WTC11 (cell line): ENCODE measurements at regions of chr9 and their contacts with region 1.

Region 1: DNA sequence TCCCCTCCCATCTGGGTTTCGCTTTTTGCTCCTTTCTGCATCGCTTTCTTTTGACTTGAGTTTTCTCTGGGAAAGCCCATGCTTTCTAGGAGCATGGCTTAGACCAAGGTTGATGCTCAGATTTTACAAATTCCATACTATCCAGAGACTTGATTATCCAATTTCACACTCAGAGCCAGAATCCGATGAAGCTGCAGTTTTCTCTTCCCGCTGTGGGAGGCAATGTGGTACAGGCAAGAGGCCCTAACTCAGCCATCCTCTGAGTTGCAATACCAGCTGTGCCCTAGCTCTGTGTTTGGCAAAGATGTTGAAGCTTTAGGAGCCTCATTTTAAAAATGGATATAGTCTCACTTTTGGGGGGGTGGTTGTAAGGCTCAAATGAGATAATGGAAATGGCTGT is 85.1 kb downstream of the BRINP1 start:
- DNase-seq: peak; percentile 38
- ATAC-seq: peak; percentile 62
- H3K4me3 Mint-ChIP-seq: peak overlapping the region; percentile 60
- H3K27ac Mint-ChIP-seq: peak overlapping the region; percentile 98
- H3K4me1 Mint-ChIP-seq: peaks cover 85% of the 10 kb centered on the region
- H3K27me3 Mint-ChIP-seq: no peaks in the 10 kb centered on the region
- CTCF ChIP-seq: no peak

Region 2: DNA sequence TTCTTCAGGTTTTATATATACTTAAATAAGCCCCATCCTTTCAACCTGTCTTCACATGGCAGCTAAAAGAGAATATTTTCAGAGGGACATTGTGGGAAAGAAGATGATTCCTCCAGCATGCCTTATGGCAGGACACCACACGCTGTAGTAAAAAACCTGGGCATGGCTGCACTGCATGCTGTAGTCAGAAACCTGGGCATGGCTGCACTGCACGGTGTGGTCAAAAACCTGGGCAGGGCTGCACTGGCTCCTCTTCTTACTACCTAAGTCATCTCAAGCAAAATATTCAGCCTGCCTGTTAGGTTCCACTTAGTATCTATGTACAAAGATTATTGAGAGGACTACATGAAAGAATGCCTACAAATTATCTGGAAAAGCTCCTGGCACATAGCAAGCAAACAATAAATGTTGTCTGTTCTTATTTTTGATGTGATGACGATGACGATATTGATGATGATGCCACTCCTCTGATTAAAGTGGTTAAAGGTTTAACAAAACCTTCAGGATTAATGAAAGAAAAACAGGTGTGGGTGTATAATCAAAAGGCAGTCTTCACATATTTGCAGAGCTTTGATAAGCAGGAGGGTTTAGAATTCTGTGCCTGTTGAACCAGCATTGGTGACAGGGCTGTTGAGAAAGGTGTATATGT is 68.3 kb before region 1 on chr9:
- CTCF ChIA-PET with region 1: no interaction called
- POLR2A ChIA-PET with region 1: no interaction called
- DNase-seq: no peak
- ATAC-seq: no peak
- H3K4me3 Mint-ChIP-seq: no peak overlapping the region
- H3K27ac Mint-ChIP-seq: no peak overlapping the region
- H3K4me1 Mint-ChIP-seq: peaks cover 11% of the 10 kb centered on the region
- H3K27me3 Mint-ChIP-seq: no peaks in the 10 kb centered on the region
- CTCF ChIP-seq: no peak

Region 3: DNA sequence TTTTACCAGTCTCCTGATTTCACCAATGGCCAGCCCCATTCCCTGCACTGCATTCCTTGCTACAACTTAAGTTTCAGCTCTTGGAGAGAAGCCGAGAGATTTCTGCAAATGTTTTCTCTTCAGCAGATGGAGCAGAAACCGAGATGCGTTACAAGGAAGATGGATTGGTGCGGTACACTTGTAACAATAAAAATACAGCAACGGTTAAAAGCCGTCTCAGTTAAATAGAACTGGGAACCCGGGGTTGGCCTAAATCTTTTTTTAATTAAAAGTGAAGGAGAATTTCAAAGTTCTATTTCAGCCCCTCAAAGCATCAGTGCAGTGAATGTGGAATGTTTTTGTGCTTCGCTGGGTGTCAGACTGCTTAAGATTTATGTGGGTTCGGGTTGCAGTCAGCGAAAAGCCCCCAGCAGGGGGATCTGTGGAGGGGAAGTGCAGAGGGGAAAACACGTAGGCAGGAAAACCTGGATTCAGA is 65.3 kb after region 1 on chr9:
- CTCF ChIA-PET with region 1: interaction called, 11 read pairs
- POLR2A ChIA-PET with region 1: no interaction called
- DNase-seq: peak; percentile 61
- ATAC-seq: peak; percentile 88
- H3K4me3 Mint-ChIP-seq: peak overlapping the region; percentile 35; the same call in 1 of the 2 replicates
- H3K27ac Mint-ChIP-seq: 0 out of 2 replicates have a peak overlapping the region, but pooled peaks have one; percentile 6
- H3K4me1 Mint-ChIP-seq: peaks cover 67% of the 10 kb centered on the region
- H3K27me3 Mint-ChIP-seq: no peaks in the 10 kb centered on the region; the same call in 1 of the 2 replicates
- CTCF ChIP-seq: no peak

Region 4: DNA sequence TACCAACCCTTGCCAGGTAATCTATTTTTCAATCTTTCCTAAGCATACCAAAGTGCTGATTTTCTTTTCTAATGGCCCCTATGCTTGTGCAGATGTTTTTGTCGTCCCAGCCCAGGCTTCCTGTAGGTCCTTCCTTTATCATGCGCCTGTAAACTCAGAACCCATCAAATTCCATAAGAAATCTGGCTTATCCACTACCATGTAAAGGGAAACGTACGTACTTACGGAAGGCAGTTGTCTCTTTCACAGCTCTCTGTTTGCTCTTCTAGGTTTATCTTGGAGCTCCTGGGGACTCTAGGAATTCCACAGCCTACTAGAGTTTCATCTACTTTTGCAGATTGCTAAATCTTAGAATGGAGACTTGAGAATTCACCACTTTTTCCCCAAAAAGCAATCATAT is 76.1 kb after region 1 on chr9:
- CTCF ChIA-PET with region 1: interaction called, 64 read pairs
- POLR2A ChIA-PET with region 1: no interaction called
- DNase-seq: no peak
- ATAC-seq: peak; percentile 71
- H3K4me3 Mint-ChIP-seq: no peak overlapping the region; the same call in 1 of the 2 replicates
- H3K27ac Mint-ChIP-seq: peak overlapping the region; percentile 73
- H3K4me1 Mint-ChIP-seq: peaks cover 62% of the 10 kb centered on the region
- H3K27me3 Mint-ChIP-seq: peaks cover 23% of the 10 kb centered on the region
- CTCF ChIP-seq: no peak

Region 5: GRCh38 chr9:119365291-119366027 is 81.3 kb after region 1 on chr9:
- CTCF ChIA-PET with region 1: interaction called, 64 read pairs
- POLR2A ChIA-PET with region 1: no interaction called
- DNase-seq: peak; percentile 82
- ATAC-seq: peak; percentile 52
- H3K4me3 Mint-ChIP-seq: peak overlapping the region; percentile 43
- H3K27ac Mint-ChIP-seq: no peak overlapping the region
- H3K4me1 Mint-ChIP-seq: peaks cover 72% of the 10 kb centered on the region
- H3K27me3 Mint-ChIP-seq: peaks cover 52% of the 10 kb centered on the region
- CTCF ChIP-seq: peak; percentile 68

Region 6: DNA sequence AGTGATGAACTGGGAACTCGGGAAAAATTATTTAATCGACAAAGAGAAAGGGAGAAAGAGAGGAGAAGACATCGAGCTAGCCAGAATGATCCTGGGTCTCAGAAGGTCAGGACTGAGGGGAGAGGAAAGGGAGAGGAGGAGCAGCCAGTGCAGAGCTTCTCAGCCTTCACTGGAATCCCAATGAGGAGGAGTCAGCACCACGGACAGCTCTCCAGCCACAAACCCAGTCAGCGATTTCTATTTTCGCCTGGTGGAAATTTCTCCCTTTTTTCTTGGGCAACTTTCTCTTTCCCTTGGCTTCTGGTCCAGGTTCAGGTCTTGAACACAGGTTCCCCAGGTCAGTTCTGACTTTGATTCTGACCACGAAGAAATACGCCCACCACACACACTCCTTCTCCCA is 86.7 kb after region 1 on chr9:
- CTCF ChIA-PET with region 1: interaction called, 64 read pairs
- POLR2A ChIA-PET with region 1: no interaction called
- DNase-seq: peak; percentile 82
- ATAC-seq: peak; percentile 24
- H3K4me3 Mint-ChIP-seq: peak overlapping the region; percentile 95
- H3K27ac Mint-ChIP-seq: no peak overlapping the region
- H3K4me1 Mint-ChIP-seq: peaks cover 45% of the 10 kb centered on the region
- H3K27me3 Mint-ChIP-seq: peaks cover 38% of the 10 kb centered on the region
- CTCF ChIP-seq: no peak